ENCODE measurements at regions of chr4 and their contacts with region 1.

Region 1: GRCh38 chr4:110510955-110511544 is 35.1 kb downstream of the ENPEP start:
- DNase-seq: peak; percentile 51
- CTCF ChIP-seq: peak; percentile 50

Region 2: GRCh38 chr4:110344162-110344561 is 166.9 kb before region 1 on chr4:
- CTCF ChIA-PET with region 1: interaction called, 37 read pairs
- POLR2A ChIA-PET with region 1: no interaction called
- DNase-seq: no peak
- CTCF ChIP-seq: peak; percentile 10

Region 3: GRCh38 chr4:110487873-110488272 is 23.2 kb before region 1 on chr4:
- CTCF ChIA-PET with region 1: interaction called, 17 read pairs
- POLR2A ChIA-PET with region 1: no interaction called
- DNase-seq: peak; percentile 16
- CTCF ChIP-seq: no peak

Region 4: DNA sequence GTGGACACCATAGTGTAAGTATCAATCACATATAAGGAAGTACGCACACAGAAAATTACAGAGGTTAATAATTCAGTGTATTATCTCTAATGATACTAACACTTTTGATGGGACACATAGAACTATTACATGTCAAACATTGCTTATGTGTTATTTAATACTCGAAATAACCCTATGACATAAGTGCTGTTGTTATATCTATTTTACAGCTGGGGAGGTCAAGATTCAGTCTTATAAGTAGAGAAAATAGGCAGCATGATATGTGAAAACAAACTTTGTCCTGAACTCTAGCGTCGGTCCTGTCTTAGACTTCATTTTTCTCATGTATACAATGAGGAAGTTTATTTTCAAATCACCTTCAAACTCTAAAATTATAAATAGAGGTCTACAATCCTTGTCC is 11.9 kb before region 1 on chr4:
- CTCF ChIA-PET with region 1: interaction called, 16 read pairs
- POLR2A ChIA-PET with region 1: no interaction called
- DNase-seq: no peak
- CTCF ChIP-seq: no peak